ENCODE measurements at regions of chr6 and their contacts with region 1.

Region 1: GRCh38 chr6:105094133-105094640 is 85.6 kb downstream of the POPDC3 start:
- DNase-seq: no peak
- ATAC-seq: no peak
- H3K4me3 ChIP-seq: no peak overlapping the region
- H3K27ac ChIP-seq: no peak overlapping the region
- H3K4me1 ChIP-seq: no peaks in the 10 kb centered on the region
- H3K27me3 ChIP-seq: no peaks in the 10 kb centered on the region
- CTCF ChIP-seq: no peak
- POLR2A ChIP-seq: no peak

Region 2: GRCh38 chr6:105209950-105210706 is 115.9 kb after region 1 on chr6:
- intact Hi-C with region 1: no loop called
- DNase-seq: no peak
- ATAC-seq: peak in 1 of 4 donors; percentile 53
- H3K4me3 ChIP-seq: no peak overlapping the region
- H3K27ac ChIP-seq: peak overlapping the region in 1 of 12 donors; percentile 30
- H3K4me1 ChIP-seq: peaks cover 0 to 7% (median 0%) of the 10 kb centered on the region in 12 donors
- H3K27me3 ChIP-seq: no peaks in the 10 kb centered on the region
- CTCF ChIP-seq: no peak
- POLR2A ChIP-seq: no peak

Region 3: DNA sequence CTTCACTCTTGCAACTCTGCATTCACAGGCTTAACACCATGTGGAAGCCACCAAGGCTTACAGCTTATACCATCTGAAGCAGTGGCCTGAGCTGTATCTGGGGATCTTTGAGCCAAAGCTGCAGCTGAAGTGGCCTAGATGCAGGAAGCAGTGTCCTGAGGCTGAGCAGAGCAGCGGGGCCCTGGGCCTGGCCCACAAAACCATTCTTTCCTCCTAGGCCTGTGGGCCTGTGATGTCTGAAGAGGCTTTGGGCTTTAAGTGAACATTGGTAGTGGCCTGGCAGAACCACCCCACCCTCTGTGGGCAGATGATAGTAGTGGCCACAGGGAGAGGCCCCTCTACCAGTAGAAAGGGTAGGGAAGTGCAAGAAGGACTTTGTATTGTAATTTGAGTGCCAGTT is 315.5 kb after region 1 on chr6:
- intact Hi-C with region 1: loop called in 9 of 10 experiments (anchors 5 kb)
- DNase-seq: no peak
- ATAC-seq: no peak
- H3K4me3 ChIP-seq: no peak overlapping the region
- H3K27ac ChIP-seq: no peak overlapping the region
- H3K4me1 ChIP-seq: no peaks in the 10 kb centered on the region
- H3K27me3 ChIP-seq: peaks cover 0 to 6% (median 0%) of the 10 kb centered on the region in 9 donors
- CTCF ChIP-seq: no peak
- POLR2A ChIP-seq: no peak